PC-9 (cell line): ENCODE measurements at regions of chr15 and their contacts with region 1.

Region 1: GRCh38 chr15:99704444-99704838 is 28.8 kb downstream of the LYSMD4 start:
- DNase-seq: peak; percentile 35 to 71
- H3K4me3 ChIP-seq: no peak overlapping the region
- H3K27ac ChIP-seq: peak overlapping the region; percentile 66; the same call in 1 of the 2 replicates
- H3K4me1 ChIP-seq: peaks cover 11% of the 10 kb centered on the region
- H3K27me3 ChIP-seq: no peaks in the 10 kb centered on the region
- CTCF ChIP-seq: peak; percentile 79

Region 2: DNA sequence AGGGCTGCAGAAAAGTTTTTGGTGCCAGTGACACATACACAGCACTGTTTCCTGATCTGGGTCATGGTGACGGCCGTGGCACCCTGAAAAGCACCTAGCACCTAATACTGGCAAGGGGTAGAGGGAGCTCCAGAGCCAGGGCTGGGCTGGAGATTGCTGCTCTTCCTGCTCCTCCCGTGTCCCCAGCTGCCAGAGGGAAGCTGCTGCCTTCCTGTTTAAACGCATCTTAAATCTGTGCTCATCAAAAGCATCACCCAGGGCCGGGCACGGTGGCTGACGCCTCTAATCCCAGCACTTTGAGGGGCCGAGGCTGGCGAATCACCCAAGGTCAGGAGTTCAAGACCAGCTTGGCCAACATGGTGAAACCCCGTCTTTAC is 295.4 kb before region 1 on chr15:
- CTCF ChIA-PET with region 1: interaction called, 22 read pairs
- POLR2A ChIA-PET with region 1: no interaction called
- intact Hi-C with region 1: loop called (anchors 1 kb)
- DNase-seq: peak; percentile 38 to 60
- H3K4me3 ChIP-seq: no peak overlapping the region
- H3K27ac ChIP-seq: no peak overlapping the region
- H3K4me1 ChIP-seq: no peaks in the 10 kb centered on the region
- H3K27me3 ChIP-seq: no peaks in the 10 kb centered on the region
- CTCF ChIP-seq: peak; percentile 70

Region 3: DNA sequence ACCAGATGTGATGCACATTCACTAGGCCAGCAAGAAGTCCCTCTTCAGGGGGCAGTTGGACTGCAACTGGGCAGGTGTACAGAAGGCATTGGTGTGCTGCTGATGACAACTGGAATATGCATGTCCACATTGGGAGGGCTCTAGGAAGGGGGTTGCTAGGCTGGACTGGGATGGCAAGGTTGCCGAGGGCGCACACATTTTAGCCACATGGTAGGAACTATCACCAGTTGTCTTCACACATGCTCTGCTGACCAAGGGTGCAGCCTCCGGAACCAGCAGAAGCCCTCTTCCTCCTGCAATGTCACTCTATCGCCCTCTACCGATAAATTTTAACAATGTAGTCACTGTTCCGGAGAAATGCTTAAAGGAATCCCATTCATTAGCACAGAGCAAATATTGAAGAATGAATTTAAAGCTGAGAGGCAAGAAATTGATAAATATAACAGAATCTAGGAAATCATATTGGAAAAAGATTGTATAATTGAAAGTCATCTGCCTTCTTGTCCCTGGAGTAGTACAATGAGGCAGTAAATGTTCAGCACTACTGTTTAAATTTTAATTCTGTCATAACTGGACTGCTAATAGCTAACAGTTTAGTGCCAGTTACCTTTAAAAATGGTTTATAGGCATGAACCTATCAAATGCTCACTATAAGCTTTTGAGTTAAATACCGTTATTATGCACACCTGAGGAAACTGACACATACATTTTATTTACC is 51.4 kb after region 1 on chr15:
- CTCF ChIA-PET with region 1: interaction called, 5 read pairs
- POLR2A ChIA-PET with region 1: no interaction called
- intact Hi-C with region 1: loop called (anchors 2 kb)
- DNase-seq: peak; percentile 24 to 38
- H3K4me3 ChIP-seq: no peak overlapping the region
- H3K27ac ChIP-seq: no peak overlapping the region
- H3K4me1 ChIP-seq: no peaks in the 10 kb centered on the region
- H3K27me3 ChIP-seq: no peaks in the 10 kb centered on the region
- CTCF ChIP-seq: peak; percentile 78

Region 4: DNA sequence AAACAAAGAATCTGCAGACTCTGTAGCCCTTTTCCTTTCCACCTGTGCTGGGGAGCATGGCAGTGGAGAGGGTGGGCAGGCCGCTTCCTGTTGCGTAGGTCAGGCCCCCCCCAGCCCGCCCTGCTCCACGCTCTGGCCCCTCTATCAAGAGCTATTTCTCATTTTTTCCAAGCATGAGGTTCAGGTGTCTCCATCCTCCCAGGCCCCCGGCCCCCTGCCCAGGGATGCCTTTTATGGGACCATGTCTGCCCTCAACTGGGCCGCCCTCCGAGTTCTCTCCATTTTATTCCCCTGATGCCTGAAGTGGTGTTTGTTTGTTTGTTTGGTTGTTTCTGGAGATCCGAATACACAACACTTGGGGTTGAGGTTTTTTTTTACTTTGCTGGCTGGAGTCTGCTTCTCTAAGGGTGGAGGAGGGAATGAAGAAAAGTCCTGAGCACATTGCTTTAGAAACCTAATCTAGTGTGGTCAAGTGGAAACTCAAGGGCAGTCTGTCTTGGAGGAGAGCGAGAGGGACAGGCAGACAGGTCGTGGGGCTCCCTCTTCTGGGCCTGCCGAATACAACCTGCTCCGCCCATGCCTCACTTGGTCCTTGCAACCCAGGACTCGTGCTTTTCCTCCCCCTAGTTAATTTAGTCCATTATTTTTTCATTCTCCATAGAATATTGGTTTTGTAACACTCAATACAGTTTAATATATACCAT is 205.3 kb after region 1 on chr15:
- CTCF ChIA-PET with region 1: no interaction called
- POLR2A ChIA-PET with region 1: no interaction called
- intact Hi-C with region 1: no loop called
- DNase-seq: peak in 1 of 2 experiments; percentile 12
- H3K4me3 ChIP-seq: no peak overlapping the region
- H3K27ac ChIP-seq: no peak overlapping the region
- H3K4me1 ChIP-seq: no peaks in the 10 kb centered on the region
- H3K27me3 ChIP-seq: peaks cover 40% of the 10 kb centered on the region
- CTCF ChIP-seq: no peak